Activated naive CD4-positive, alpha-beta T cell treated with anti-CD3 and anti-CD28 coated beads for 36 hours (primary cell): ENCODE measurements at regions of chr14 and their contacts with region 1.

Region 1: DNA sequence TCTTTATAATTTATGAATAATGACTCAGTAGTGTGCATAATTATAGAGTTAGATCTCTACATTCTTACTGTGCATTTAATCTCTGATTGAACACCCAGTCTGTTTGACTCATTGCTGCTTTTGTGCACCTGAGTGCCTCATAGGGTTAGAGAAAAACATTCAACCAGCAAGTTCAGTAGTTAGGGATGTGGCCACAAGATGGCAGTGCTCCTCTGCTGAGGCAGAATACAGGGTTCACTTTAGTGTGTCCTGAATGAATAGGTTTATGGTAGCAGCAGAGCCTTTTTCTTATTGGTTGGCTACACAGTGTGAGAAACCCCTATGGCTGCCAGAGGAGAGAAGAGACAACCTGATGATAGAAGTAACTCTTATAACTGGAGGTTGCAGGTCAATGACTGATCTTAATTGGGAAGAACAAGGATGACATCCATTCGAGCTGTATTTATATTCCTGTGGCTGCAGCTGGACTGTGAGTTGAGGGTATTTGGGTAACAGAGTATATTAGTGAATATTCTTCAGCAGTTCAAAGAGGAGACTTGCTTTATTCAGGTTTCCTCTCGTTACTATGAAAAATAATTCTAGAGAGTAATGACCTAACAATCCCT is 194.9 kb upstream of the OR4E1 start:
- DNase-seq: peak; percentile 95
- H3K4me3 Mint-ChIP-seq: peak overlapping the region; percentile 71
- H3K27ac Mint-ChIP-seq: peak overlapping the region; percentile 83
- H3K4me1 Mint-ChIP-seq: peaks cover 42% of the 10 kb centered on the region
- H3K27me3 Mint-ChIP-seq: no peaks in the 10 kb centered on the region

Region 2: GRCh38 chr14:21882226-21882625 is 13.7 kb after region 1 on chr14:
- CTCF ChIA-PET with region 1: interaction called, 5 read pairs
- intact Hi-C with region 1: loop called (anchors 2 kb)
- DNase-seq: no peak
- H3K4me3 Mint-ChIP-seq: no peak overlapping the region
- H3K27ac Mint-ChIP-seq: no peak overlapping the region
- H3K4me1 Mint-ChIP-seq: peaks cover 4% of the 10 kb centered on the region
- H3K27me3 Mint-ChIP-seq: no peaks in the 10 kb centered on the region

Region 3: DNA sequence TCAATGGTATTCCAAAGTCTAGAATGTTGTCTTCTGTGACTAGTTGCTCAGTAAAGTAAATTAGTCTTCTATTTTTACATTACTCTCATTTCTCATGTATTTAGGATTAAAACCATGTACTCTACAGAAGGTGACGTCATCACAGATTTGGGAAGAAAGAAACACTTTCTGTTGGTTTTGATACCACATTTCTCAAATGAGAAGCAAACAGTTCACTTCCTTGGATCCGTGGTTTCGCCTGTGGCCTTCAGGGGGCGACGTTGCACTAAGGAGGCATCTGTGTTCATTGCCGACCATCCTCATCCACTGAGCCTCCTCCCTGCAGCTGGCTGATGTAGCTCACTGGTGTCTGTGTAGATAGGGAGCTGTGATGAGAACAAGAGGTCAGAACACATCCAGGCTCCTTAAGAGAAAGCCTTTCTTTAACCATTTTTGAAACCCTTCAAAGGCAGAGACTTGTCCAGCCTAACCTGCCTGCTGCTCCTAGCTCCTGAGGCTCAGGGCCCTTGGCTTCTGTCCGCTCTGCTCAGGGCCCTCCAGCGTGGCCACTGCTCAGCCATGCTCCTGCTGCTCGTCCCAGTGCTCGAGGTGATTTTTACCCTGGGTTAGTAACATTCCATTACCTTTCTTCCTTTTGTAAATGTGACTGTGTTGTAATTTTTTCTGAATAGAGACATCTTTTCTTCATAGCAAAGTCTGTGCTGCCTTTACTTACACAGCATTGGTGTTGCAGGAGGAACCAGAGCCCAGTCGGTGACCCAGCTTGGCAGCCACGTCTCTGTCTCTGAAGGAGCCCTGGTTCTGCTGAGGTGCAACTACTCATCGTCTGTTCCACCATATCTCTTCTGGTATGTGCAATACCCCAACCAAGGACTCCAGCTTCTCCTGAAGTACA is 25.7 kb after region 1 on chr14:
- CTCF ChIA-PET with region 1: interaction called, 6 read pairs
- intact Hi-C with region 1: loop called (anchors 2 kb)
- DNase-seq: peak; percentile 79
- H3K4me3 Mint-ChIP-seq: peak overlapping the region; percentile 71
- H3K27ac Mint-ChIP-seq: peak overlapping the region; percentile 87
- H3K4me1 Mint-ChIP-seq: peaks cover 11% of the 10 kb centered on the region
- H3K27me3 Mint-ChIP-seq: no peaks in the 10 kb centered on the region

Region 4: GRCh38 chr14:22131749-22132476 is 263.4 kb after region 1 on chr14:
- CTCF ChIA-PET with region 1: no interaction called
- intact Hi-C with region 1: no loop called
- DNase-seq: peak; percentile 52
- H3K4me3 Mint-ChIP-seq: no peak overlapping the region
- H3K27ac Mint-ChIP-seq: no peak overlapping the region
- H3K4me1 Mint-ChIP-seq: peaks cover 3% of the 10 kb centered on the region
- H3K27me3 Mint-ChIP-seq: no peaks in the 10 kb centered on the region

Region 5: DNA sequence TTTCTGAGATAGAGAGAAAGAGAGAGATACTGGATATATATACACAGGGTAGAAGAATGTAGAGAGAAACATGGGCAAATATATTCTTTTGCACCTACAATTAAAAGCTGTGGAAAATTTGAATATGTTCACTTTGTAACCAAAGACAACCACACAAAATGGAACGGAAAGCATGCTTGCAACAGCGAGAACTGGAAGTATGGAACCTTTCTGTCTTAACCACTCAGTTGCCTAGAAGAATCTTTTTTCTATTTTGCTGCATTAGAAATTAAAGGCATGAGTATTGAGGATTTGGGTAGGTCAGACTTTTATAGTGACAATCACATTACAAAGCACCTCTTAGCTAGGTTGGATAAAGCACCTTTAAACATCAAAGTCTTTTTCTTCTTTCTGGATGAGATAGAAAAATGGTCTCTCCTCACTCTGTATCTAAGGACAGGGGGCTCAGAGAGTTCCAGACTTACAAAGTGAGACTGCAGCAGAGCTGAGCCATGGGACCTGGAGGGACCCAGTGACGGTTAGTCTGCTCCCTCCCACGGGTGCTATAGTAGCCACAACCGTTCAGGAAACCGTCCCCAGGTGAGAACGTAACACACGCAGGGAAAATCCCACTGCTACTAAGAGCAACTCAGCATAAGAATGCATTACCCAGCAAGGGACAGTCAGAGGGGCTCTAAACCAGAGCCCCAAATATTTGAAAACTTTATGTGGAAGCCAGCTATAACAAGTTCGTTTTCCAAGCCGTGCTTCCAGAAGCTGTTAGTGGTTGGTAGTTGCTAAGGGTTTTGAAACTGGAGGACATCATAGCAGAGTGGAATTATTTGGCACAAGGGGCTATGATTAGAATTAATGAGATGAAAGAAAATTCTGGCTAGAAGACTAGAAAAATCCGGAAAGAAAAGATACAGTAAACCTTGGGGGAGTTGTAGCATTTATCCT is 623.4 kb after region 1 on chr14:
- CTCF ChIA-PET with region 1: no interaction called
- intact Hi-C with region 1: loop called (anchors 5 kb)
- DNase-seq: peak; percentile 53
- H3K4me3 Mint-ChIP-seq: peak overlapping the region; percentile 87
- H3K27ac Mint-ChIP-seq: peak overlapping the region; percentile 98
- H3K4me1 Mint-ChIP-seq: peaks cover 12% of the 10 kb centered on the region
- H3K27me3 Mint-ChIP-seq: no peaks in the 10 kb centered on the region